Posterior vena cava (tissue), 2 donors: ENCODE measurements at regions of chr7 and their contacts with region 1.

Region 1: GRCh38 chr7:94295850-94296249 is 98.8 kb upstream of the COL1A2 start:
- DNase-seq: no peak

Region 2: DNA sequence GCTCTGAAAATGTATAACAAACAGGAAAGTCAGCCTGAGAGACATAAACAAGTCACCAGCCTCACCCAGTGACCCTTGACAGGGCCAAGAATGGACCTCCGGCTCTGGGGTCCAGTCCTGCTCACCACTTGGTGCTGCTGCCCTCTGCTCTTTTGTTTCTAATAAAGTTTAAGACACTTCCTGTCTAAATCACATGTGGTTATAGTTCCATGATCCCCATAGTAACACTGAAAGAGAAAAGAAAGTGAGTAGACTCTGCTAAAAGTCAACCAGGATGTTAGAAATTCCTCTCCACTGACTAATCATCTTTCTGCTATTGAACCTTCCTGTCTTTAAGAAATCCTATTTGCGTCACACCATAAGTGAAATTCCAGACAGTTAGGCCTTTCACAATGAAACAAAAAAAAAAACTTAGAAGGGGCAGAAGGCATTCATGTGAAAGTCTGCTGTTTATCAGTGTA is 112.5 kb before region 1 on chr7:
- intact Hi-C with region 1: no loop called
- DNase-seq: peak; percentile 73

Region 3: GRCh38 chr7:94414481-94414880 is 118.6 kb after region 1 on chr7:
- intact Hi-C with region 1: loop called in 1 of 2 experiments (anchors 10 kb)
- DNase-seq: no peak